Endothelial cell of umbilical vein (primary cell): ENCODE measurements at regions of chr12 and their contacts with region 1.

Region 1: DNA sequence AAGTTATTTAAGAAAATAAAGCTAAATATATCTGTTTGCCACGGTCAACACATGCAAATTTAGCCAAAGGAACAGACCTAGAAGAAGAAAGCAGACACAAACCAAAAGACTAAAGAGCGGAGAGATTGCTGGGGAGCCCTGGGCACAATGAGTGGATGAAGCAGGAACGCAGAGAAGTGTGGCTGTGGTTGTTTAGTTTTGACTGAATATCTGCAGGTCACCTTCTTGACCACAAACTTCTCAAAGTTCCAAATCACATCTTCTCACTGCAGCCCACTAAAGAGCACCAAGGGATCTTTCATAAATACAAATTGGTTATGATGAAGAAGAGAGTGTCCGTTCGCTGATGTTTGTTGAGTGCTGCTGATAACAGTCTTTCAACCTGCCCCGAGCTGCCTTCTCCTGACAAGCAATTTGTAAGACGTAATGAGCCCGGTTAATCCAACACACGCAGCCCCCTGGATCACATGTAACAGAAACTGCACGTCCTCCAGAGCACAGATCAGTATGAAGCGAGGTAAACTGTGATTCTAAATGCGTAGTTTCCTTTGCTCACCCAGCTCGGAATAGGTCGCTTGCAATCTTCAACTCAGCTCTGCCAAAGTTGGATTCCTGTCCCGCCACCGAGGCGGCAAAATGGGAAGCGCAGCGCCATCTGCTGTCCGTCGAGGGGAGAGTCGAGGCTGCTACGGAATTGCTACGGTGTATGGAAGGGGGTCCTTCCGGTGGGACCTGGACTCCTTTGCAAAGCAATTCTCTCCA is 120.8 kb downstream of the GXYLT1 start:
- DNase-seq: peak; percentile 81
- H3K4me3 ChIP-seq: peak overlapping the region in 2 of 3 experiments; percentile 31 to 58
- H3K27ac ChIP-seq: peak overlapping the region; percentile 30
- H3K4me1 ChIP-seq: peaks cover 23% of the 10 kb centered on the region
- H3K27me3 ChIP-seq: no peaks in the 10 kb centered on the region
- CTCF ChIP-seq: peak; percentile 93 to 96
- POLR2A ChIP-seq: no peak

Region 2: DNA sequence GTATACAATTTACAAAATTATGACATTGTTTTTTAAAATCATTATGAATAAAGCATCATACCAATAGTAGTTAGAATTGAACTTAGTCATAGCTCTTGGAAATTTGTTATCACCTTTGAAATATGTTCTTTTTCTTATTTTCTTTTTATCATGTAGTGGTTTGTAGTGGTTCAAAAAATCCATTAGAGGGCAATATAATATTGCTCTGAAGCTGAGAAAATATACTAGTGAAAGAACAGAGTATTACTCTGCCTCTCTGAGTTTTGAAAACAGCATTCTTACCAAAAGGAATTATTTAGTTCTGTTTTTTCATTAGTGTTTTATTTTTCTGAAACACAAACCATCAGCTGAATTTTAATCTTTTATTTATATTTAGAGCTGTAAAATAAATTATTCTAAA is 759.6 kb before region 1 on chr12:
- CTCF ChIA-PET with region 1: interaction called, 28 read pairs
- POLR2A ChIA-PET with region 1: no interaction called
- dilution Hi-C with region 1: no loop called
- intact Hi-C with region 1: loop called (anchors 1 kb)
- DNase-seq: peak; percentile 16
- H3K4me3 ChIP-seq: no peak overlapping the region
- H3K27ac ChIP-seq: no peak overlapping the region
- H3K4me1 ChIP-seq: no peaks in the 10 kb centered on the region
- H3K27me3 ChIP-seq: no peaks in the 10 kb centered on the region
- CTCF ChIP-seq: peak; percentile 13 to 16
- POLR2A ChIP-seq: no peak

Region 3: DNA sequence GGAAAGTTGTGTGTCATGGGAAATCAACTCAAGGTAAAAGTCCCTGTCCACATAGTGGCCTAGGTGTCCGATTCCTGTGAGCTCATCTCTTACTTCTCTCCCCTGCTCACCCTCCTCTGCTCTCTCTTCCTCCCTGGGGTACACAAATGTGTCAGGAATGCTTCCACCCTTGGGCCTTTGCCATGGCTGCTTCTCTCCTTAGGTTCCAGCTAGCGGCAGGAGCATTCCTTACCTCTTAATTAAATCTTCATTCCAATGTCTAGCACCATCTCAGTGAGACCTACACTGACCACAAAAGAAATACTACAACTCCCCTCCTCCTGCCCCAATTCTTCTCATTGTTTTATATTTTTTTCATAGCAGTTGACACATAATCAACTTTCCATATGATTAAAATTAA is 537.2 kb before region 1 on chr12:
- CTCF ChIA-PET with region 1: interaction called, 3 read pairs
- POLR2A ChIA-PET with region 1: no interaction called
- dilution Hi-C with region 1: no loop called
- intact Hi-C with region 1: loop called (anchors 1 kb)
- DNase-seq: no peak
- H3K4me3 ChIP-seq: no peak overlapping the region
- H3K27ac ChIP-seq: peak overlapping the region; percentile 71
- H3K4me1 ChIP-seq: peaks cover 24% of the 10 kb centered on the region
- H3K27me3 ChIP-seq: no peaks in the 10 kb centered on the region
- CTCF ChIP-seq: no peak
- POLR2A ChIP-seq: no peak

Region 4: DNA sequence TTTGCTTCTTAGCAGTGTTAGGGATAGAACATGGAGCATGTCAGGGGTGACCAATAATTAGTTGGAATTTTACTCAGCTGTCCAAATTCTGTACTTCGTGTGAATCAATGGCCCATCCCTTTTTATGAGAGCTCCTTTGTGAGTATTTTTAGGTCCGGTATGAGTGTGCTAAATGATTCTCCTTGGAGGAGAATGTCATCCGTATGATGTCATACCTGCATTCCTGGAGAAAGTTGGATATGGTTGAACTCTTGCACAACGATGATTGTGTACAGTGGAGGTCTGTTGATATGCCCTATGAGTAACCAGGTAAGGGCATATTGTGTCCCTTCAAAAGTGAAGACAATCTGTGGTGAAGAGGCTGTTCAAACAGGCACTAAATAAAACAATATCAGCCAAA is 280.1 kb before region 1 on chr12:
- CTCF ChIA-PET with region 1: interaction called, 15 read pairs
- POLR2A ChIA-PET with region 1: no interaction called
- dilution Hi-C with region 1: no loop called
- intact Hi-C with region 1: loop called (anchors 5 kb)
- DNase-seq: no peak
- H3K4me3 ChIP-seq: no peak overlapping the region
- H3K27ac ChIP-seq: no peak overlapping the region
- H3K4me1 ChIP-seq: peaks cover 4% of the 10 kb centered on the region
- H3K27me3 ChIP-seq: no peaks in the 10 kb centered on the region
- CTCF ChIP-seq: no peak
- POLR2A ChIP-seq: no peak

Region 5: GRCh38 chr12:41967668-41968500 is 56.0 kb before region 1 on chr12:
- CTCF ChIA-PET with region 1: interaction called, 17 read pairs
- POLR2A ChIA-PET with region 1: no interaction called
- dilution Hi-C with region 1: no loop called
- intact Hi-C with region 1: no loop called
- DNase-seq: peak; percentile 17
- H3K4me3 ChIP-seq: no peak overlapping the region
- H3K27ac ChIP-seq: no peak overlapping the region
- H3K4me1 ChIP-seq: peaks cover 4% of the 10 kb centered on the region
- H3K27me3 ChIP-seq: no peaks in the 10 kb centered on the region
- CTCF ChIP-seq: no peak
- POLR2A ChIP-seq: no peak

Region 6: GRCh38 chr12:43282106-43282505 is 1258.2 kb after region 1 on chr12:
- CTCF ChIA-PET with region 1: interaction called, 5 read pairs
- POLR2A ChIA-PET with region 1: no interaction called
- dilution Hi-C with region 1: no loop called
- intact Hi-C with region 1: loop called (anchors 10 kb)
- DNase-seq: peak; percentile 72
- H3K4me3 ChIP-seq: no peak overlapping the region
- H3K27ac ChIP-seq: no peak overlapping the region
- H3K4me1 ChIP-seq: peaks cover 51% of the 10 kb centered on the region
- H3K27me3 ChIP-seq: no peaks in the 10 kb centered on the region
- CTCF ChIP-seq: peak in 1 of 2 donors; percentile 14
- POLR2A ChIP-seq: no peak